Heart left ventricle (tissue), 16 donors: ENCODE measurements at regions of chr16 and their contacts with region 1.

Region 1: DNA sequence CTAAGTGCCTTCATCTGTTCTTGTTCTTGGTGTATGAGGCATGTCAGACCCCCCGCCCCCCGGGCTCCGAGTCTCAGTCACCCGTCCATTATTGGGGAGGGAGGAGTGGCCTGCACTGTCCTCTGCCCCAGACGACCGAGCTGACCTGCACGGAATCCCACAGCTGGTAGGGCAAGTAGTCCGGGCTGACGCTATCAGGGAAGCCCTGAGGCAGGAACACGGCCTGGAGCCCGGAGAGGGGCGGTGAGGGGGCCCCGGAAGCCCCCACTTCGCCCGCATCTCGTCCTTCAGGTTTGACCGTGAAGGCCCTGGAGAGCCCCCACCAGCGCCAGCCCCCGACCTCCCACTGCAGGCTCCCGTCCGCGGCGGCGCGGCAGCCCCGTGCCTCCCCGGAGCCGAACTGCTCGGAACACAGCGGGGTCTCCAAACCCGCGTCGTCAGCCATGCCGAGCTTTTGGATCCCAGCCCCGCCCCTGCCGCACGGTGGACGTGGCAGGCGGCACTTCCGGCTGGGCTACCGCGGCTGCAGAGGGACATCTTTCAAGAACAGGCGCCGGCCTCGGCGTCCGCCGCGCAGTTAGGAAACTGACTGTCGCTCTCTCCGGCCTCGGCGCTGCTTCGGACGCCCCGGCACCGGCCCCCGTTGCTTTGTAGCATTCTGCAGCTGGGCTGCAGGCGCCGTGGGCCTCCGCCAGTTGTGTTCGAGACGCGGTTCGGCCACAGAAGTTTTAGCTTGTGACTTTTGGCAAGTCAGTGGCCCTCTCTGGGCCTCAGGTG is at the start of gene RUSF1:
- DNase-seq: peak; percentile 93 to 96 (median 94)
- ATAC-seq: peak; percentile 89 to 97 (median 96)
- H3K4me3 ChIP-seq: peak within 1 kb of the TSS; percentile 73 to 100 (median 86)
- H3K27ac ChIP-seq: peak within 1 kb of the TSS; percentile 82 to 98 (median 94)
- H3K4me1 ChIP-seq: peaks cover 4 to 58% (median 48%) of the 10 kb centered on the region in 12 donors
- H3K27me3 ChIP-seq: no peaks in the 10 kb centered on the region
- CTCF ChIP-seq: peak in 1 of 12 donors; percentile 10
- POLR2A ChIP-seq: peak in 1 of 2 donors; percentile 76
- total RNA-seq, gene RUSF1: 17.8 to 32.5 (median 21.2) TPM

Region 2: GRCh38 chr16:31472709-31473203 is 35.4 kb before region 1 on chr16:
- intact Hi-C with region 1: loop called in 3 of 10 experiments (anchors 2 to 5 kb)
- DNase-seq: peak; percentile 90 to 94 (median 92)
- ATAC-seq: peak; percentile 88 to 94 (median 91)
- H3K4me3 ChIP-seq: peak overlapping the region; percentile 45 to 86 (median 68)
- H3K27ac ChIP-seq: peak overlapping the region; percentile 75 to 97 (median 90)
- H3K4me1 ChIP-seq: peaks cover 0 to 31% (median 14%) of the 10 kb centered on the region in 12 donors
- H3K27me3 ChIP-seq: peaks cover 0 to 2% (median 0%) of the 10 kb centered on the region in 9 donors
- CTCF ChIP-seq: peak; percentile 48 to 92 (median 65)
- POLR2A ChIP-seq: peak in 1 of 2 donors; percentile 24

Region 3: DNA sequence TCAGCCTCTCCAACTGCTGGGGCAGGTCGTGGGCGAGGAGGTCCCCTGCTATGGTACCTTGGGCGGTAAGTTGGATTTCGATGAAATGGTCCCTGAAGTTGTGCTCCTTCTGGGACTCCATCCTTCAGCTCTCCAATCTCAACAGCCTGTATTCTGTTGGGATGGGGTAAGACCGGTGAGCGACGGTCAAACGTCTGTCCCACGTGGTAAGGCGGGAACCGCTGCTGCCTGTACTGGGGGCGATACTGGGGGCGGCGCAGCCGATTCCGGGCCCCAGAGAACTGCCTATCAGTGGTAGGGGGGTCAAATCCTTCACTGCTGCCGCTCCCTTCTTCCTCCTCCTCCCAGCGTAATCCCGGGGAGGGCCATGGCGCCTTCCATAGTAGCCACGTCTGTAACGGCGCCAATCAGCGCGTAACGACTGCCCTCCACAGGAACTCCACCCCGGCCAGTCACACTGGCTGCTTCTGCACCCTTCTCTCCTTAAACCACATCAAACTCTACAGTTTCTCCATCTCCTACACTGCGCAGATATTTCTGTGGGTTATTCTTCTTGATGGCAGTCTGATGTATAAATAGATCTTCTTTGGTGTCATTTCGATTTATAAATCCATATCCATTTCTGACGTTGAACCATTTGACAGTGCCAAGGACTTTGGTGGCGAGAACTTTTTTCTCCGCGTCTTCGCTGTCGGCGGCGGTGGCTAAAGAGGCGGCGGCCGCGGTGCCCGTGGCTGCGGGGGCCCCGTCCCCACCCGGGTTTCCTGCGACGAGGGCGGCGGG is 60.7 kb after region 1 on chr16:
- intact Hi-C with region 1: loop called in 1 of 10 experiments (anchors 10 kb)
- DNase-seq: peak in 1 of 5 donors; percentile 23
- ATAC-seq: peak in 2 of 4 donors; percentile 46
- H3K4me3 ChIP-seq: peak overlapping the region in 11 of 12 donors; percentile 10 to 47 (median 32)
- H3K27ac ChIP-seq: no peak overlapping the region
- H3K4me1 ChIP-seq: peaks cover 0 to 10% (median 0%) of the 10 kb centered on the region in 12 donors
- H3K27me3 ChIP-seq: peaks cover 15 to 60% (median 25%) of the 10 kb centered on the region in 9 donors
- CTCF ChIP-seq: peak in 1 of 12 donors; percentile 8
- POLR2A ChIP-seq: no peak

Region 4: DNA sequence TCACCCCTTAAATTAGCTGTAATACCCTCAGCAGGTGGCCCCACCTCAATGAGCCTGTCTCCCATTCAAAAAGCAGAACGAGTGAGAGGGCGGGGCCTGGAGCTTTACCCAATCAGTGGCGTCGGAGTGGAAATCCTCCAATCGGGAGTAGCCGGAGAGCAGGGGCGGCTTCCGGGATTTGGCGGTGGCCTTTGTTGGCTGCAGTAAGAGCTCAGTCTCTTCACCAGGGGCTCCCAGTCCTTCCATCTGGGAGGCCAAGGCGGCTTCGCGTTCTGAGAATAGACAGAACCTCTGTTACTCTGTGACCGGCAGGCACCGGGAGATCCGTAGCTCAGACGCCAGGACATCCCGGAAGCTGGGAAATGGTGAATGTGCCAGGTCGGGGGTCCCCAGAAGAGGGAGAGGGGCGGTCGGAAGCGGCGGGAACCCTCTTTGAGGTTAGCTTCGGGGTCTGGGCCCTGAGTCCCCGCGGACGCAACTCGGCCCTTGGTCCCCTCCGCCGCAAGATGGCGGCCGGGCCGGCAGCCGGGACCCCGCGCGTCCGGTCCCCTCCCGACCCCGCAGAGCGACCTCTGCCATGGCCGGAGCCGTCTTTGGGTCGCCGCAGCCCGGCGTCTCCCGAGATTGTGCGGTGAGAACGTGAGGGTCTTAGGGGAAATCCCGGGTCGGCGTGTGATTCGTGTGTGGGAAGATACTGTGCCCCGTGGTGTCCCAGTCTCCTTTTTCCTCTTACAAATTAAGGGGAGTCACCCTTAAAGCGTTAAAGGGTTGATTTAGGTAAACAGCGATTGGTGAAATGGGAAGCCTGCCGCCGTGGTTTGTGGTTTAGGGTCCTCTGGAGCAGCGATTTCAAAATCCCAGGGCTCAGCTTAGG is 205.2 kb after region 1 on chr16:
- intact Hi-C with region 1: loop called in 2 of 10 experiments (anchors 5 to 10 kb)
- DNase-seq: peak; percentile 93 to 96 (median 94)
- ATAC-seq: peak; percentile 94 to 98 (median 96)
- H3K4me3 ChIP-seq: peak overlapping the region; percentile 75 to 100 (median 88)
- H3K27ac ChIP-seq: peak overlapping the region; percentile 82 to 99 (median 96)
- H3K4me1 ChIP-seq: peaks cover 0 to 26% (median 15%) of the 10 kb centered on the region in 12 donors
- H3K27me3 ChIP-seq: no peaks in the 10 kb centered on the region
- CTCF ChIP-seq: peak in 1 of 12 donors; percentile 7
- POLR2A ChIP-seq: peak; percentile 75 to 93

Region 5: DNA sequence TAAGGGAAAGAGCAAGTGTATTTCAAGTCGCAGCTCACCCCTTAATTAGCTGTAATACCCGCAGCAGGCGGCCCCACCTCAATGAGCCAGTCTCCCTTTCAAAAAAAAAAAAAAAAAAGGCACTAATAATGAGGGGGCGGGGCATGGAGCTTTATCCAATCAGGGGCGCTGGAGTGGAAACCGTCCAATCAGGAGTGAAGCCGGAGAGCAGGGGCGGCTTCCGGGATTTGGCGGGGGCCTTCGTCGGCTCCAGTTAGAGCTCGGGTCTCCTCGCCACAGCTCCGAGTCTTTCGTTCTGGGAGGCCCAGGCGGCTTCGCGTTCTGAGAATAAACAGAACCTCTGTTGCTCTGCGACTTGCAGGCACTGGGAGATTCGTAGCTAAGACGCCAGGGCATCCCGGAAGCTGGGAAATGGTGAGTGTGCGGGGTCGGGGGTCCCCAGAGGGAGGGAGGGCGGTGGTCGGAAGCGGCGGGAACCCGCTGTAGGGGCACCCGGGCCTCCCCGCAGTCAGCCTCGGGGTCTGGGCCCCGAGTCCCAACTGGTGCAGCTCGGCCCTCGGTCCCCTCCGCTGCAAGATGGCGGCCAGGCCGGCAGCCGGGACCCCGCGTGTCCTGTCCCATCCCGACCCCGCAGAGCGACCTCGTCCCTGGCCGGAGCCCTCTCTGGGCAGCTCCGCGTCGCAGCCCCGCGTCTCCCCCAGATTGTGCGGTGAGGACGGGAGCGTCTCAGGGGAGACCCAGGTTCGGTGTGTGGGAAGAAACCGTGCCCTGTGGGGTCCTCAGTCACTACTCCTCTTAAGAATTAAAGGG is 365.6 kb after region 1 on chr16 and contains the start of gene ZNF267:
- intact Hi-C with region 1: loop called in 2 of 10 experiments (anchors 10 kb)
- DNase-seq: peak; percentile 95 to 97 (median 96)
- ATAC-seq: peak; percentile 91 to 97 (median 94)
- H3K4me3 ChIP-seq: peak within 1 kb of the TSS; percentile 72 to 100 (median 94)
- H3K27ac ChIP-seq: peak within 1 kb of the TSS; percentile 24 to 98 (median 86)
- H3K4me1 ChIP-seq: peaks cover 3 to 74% (median 29%) of the 10 kb centered on the region in 12 donors
- H3K27me3 ChIP-seq: no peaks in the 10 kb centered on the region
- CTCF ChIP-seq: no peak
- POLR2A ChIP-seq: peak in 1 of 2 donors; percentile 71
- total RNA-seq, gene ZNF267: 3.1 to 22.6 (median 5.3) TPM